GM12878 (cell line): ENCODE measurements at regions of chr10 and their contacts with region 1.

Region 1: DNA sequence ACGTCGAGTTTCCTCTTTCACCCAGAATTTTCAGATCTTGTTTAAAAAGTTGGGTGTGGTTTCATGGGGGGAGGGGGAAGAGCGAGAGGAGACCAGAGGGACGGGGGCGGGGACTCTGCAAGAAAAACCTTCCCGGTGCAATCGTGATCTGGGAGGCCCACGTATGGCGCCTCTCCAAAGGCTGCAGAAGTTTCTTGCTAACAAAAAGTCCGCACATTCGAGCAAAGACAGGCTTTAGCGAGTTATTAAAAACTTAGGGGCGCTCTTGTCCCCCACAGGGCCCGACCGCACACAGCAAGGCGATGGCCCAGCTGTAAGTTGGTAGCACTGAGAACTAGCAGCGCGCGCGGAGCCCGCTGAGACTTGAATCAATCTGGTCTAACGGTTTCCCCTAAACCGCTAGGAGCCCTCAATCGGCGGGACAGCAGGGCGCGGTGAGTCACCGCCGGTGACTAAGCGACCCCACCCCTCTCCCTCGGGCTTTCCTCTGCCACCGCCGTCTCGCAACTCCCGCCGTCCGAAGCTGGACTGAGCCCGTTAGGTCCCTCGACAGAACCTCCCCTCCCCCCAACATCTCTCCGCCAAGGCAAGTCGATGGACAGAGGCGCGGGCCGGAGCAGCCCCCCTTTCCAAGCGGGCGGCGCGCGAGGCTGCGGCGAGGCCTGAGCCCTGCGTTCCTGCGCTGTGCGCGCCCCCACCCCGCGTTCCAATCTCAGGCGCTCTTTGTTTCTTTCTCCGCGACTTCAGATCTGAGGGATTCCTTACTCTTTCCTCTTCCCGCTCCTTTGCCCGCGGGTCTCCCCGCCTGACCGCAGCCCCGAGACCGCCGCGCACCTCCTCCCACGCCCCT is at the start of gene VIM:
- DNase-seq: peak; percentile 69
- ATAC-seq: peak; percentile 54
- H3K4me3 ChIP-seq: peak within 1 kb of the TSS; percentile 78
- H3K27ac ChIP-seq: peak within 1 kb of the TSS; percentile 64
- H3K4me1 ChIP-seq: peaks cover 32% of the 10 kb centered on the region
- H3K27me3 ChIP-seq: no peaks in the 10 kb centered on the region; a peak in 1 of 4 replicates
- CTCF ChIP-seq: no peak
- EP300 ChIP-seq: peak in 1 of 2 experiments; percentile 45; a peak in 1 of 4 replicates
- POLR2A ChIP-seq: peak; percentile 53
- RAD21 ChIP-seq: no peak
- polyA plus RNA-seq, gene VIM: 44.2 to 115 TPM

Region 2: GRCh38 chr10:16586358-16587138 is 641.8 kb before region 1 on chr10:
- CTCF ChIA-PET with region 1: no interaction called
- POLR2A ChIA-PET with region 1: no interaction called
- RAD21 ChIA-PET with region 1: no interaction called
- SMC1A ChIA-PET with region 1: no interaction called
- in situ Hi-C with region 1: no loop called
- intact Hi-C with region 1: loop called (anchors 10 kb)
- DNase-seq: peak; percentile 54
- ATAC-seq: peak; percentile 91
- H3K4me3 ChIP-seq: peak overlapping the region; percentile 34; the same call in 1 of the 2 replicates
- H3K27ac ChIP-seq: peak overlapping the region; percentile 76
- H3K4me1 ChIP-seq: peaks cover 29% of the 10 kb centered on the region
- H3K27me3 ChIP-seq: no peaks in the 10 kb centered on the region
- CTCF ChIP-seq: no peak
- EP300 ChIP-seq: peak; percentile 20 to 21; a peak in 1 of 4 replicates
- POLR2A ChIP-seq: no peak
- RAD21 ChIP-seq: 0 out of 2 replicates have a peak, but pooled peaks have one; percentile 13

Region 3: DNA sequence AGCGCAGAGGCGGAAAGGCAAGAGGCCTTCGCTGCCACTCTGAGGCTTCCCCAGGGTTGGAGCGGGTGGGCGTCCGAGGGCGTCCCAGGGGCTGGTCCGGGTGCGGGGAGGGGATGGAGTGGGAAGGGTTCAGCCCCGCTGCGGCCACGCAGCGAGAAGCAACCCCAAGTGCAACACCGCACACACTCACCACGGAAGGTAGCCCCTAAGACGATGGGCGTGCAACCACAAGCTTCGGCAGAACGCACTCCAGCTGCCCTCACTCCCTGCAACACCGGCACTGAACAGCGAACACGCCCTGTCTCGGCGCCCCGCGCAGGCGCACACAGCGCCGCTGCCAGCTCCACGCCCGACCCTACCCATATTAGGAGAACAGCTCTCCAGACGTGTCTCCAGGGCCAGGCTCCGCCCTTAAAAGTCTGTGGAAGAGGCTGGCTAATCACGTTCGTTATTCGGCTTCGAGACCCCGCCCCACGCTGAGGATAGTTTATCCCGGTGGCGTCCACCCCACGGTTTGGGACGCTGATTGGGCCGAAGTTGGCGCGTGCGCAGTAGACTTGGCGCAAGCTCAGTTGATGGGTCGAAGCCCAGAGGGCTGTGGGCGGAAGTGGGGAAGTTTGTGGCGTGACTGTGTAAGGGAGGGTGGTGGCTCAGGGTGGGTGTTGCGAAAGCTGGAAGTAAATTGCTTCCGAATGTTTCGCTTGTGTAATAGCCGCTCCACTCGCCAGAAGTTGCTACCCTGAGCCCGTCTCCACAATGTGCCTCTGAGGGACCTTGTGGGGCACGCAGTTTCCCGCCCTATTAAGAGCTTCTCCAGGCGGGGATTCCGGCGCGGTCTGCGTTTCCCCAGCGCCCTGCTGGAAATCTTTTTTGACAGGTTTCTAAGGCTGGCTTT is 410.9 kb before region 1 on chr10 and contains the start of gene RSU1:
- CTCF ChIA-PET with region 1: no interaction called
- POLR2A ChIA-PET with region 1: interaction called, 3 read pairs
- RAD21 ChIA-PET with region 1: no interaction called
- SMC1A ChIA-PET with region 1: interaction called, 4 read pairs
- in situ Hi-C with region 1: no loop called
- intact Hi-C with region 1: loop called (anchors 5 kb)
- DNase-seq: peak; percentile 98
- ATAC-seq: peak; percentile 97
- H3K4me3 ChIP-seq: peak within 1 kb of the TSS; percentile 85
- H3K27ac ChIP-seq: peak within 1 kb of the TSS; percentile 78
- H3K4me1 ChIP-seq: no peaks in the 10 kb centered on the region
- H3K27me3 ChIP-seq: no peaks in the 10 kb centered on the region; a peak in 1 of 4 replicates
- CTCF ChIP-seq: no peak
- EP300 ChIP-seq: no peak
- POLR2A ChIP-seq: peak; percentile 89
- RAD21 ChIP-seq: no peak
- polyA plus RNA-seq, gene RSU1: 80.7 to 139 TPM

Region 4: GRCh38 chr10:17029581-17030271 is 198.6 kb before region 1 on chr10:
- CTCF ChIA-PET with region 1: no interaction called
- POLR2A ChIA-PET with region 1: no interaction called
- RAD21 ChIA-PET with region 1: no interaction called
- SMC1A ChIA-PET with region 1: no interaction called
- in situ Hi-C with region 1: no loop called
- intact Hi-C with region 1: loop called (anchors 5 kb)
- DNase-seq: no peak
- ATAC-seq: no peak
- H3K4me3 ChIP-seq: no peak overlapping the region
- H3K27ac ChIP-seq: no peak overlapping the region
- H3K4me1 ChIP-seq: no peaks in the 10 kb centered on the region
- H3K27me3 ChIP-seq: no peaks in the 10 kb centered on the region
- CTCF ChIP-seq: no peak
- EP300 ChIP-seq: no peak
- POLR2A ChIP-seq: no peak
- RAD21 ChIP-seq: no peak

Region 5: GRCh38 chr10:17200912-17201793 is 27.2 kb before region 1 on chr10 and contains the start of gene TRDMT1:
- CTCF ChIA-PET with region 1: interaction called, 16 read pairs
- POLR2A ChIA-PET with region 1: interaction called, 23 read pairs
- RAD21 ChIA-PET with region 1: interaction called, 14 read pairs
- SMC1A ChIA-PET with region 1: interaction called, 17 read pairs
- in situ Hi-C with region 1: no loop called
- intact Hi-C with region 1: loop called (anchors 1 kb)
- DNase-seq: no peak
- ATAC-seq: peak; percentile 99
- H3K4me3 ChIP-seq: peak within 1 kb of the TSS; percentile 89
- H3K27ac ChIP-seq: peak within 1 kb of the TSS; percentile 58; the same call in 1 of the 2 replicates
- H3K4me1 ChIP-seq: peaks cover under 1% of the 10 kb centered on the region
- H3K27me3 ChIP-seq: no peaks in the 10 kb centered on the region
- CTCF ChIP-seq: no peak
- EP300 ChIP-seq: no peak
- POLR2A ChIP-seq: peak; percentile 87
- RAD21 ChIP-seq: peak; percentile 22; the same call in 1 of the 2 replicates
- polyA plus RNA-seq, gene TRDMT1: 2.3 to 5.2 TPM

Region 6: DNA sequence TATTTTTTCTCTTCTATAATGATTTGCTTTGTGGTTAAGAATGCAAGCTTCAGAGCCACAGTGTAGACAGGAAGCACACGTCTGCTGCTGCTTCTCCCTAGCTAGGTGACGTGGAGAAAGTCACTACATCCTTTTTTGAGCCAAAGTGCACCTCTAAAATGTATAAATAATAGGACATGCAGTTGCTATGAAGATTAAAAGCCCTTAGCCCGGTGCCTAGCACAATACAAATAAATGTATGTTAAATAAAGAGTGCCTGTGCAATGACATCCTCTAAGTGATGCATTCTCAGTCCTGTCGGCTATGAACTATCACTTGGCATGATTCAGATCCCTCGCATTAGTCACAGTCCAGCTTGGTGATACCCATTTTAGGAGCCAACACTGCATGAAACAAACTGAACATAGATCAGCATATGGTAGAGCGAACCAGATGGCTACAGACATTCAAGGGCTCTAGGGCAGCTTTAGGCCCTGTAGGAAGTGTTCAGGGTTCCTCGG is 22.1 kb before region 1 on chr10:
- CTCF ChIA-PET with region 1: interaction called, 16 read pairs
- POLR2A ChIA-PET with region 1: interaction called, 23 read pairs
- RAD21 ChIA-PET with region 1: interaction called, 14 read pairs
- SMC1A ChIA-PET with region 1: interaction called, 17 read pairs
- in situ Hi-C with region 1: no loop called
- intact Hi-C with region 1: loop called (anchors 1 kb)
- DNase-seq: no peak
- ATAC-seq: peak; percentile 64
- H3K4me3 ChIP-seq: no peak overlapping the region
- H3K27ac ChIP-seq: no peak overlapping the region
- H3K4me1 ChIP-seq: peaks cover 5% of the 10 kb centered on the region
- H3K27me3 ChIP-seq: no peaks in the 10 kb centered on the region; a peak in 1 of 4 replicates
- CTCF ChIP-seq: no peak
- EP300 ChIP-seq: peak; percentile 31 to 48; a peak in 2 of 4 replicates
- POLR2A ChIP-seq: no peak
- RAD21 ChIP-seq: no peak

Region 7: GRCh38 chr10:17216217-17216900 is 12.0 kb before region 1 on chr10:
- CTCF ChIA-PET with region 1: interaction called, 6 read pairs
- POLR2A ChIA-PET with region 1: interaction called, 12 read pairs
- RAD21 ChIA-PET with region 1: interaction called, 6 read pairs
- SMC1A ChIA-PET with region 1: interaction called, 7 read pairs
- in situ Hi-C with region 1: no loop called
- intact Hi-C with region 1: loop called (anchors 1 kb)
- DNase-seq: peak; percentile 82
- ATAC-seq: peak; percentile 99
- H3K4me3 ChIP-seq: no peak overlapping the region
- H3K27ac ChIP-seq: no peak overlapping the region
- H3K4me1 ChIP-seq: peaks cover 14% of the 10 kb centered on the region
- H3K27me3 ChIP-seq: no peaks in the 10 kb centered on the region
- CTCF ChIP-seq: no peak
- EP300 ChIP-seq: peak; percentile 73 to 91
- POLR2A ChIP-seq: no peak
- RAD21 ChIP-seq: no peak